ENCODE measurements at regions of chr4 and their contacts with region 1.

Region 1: DNA sequence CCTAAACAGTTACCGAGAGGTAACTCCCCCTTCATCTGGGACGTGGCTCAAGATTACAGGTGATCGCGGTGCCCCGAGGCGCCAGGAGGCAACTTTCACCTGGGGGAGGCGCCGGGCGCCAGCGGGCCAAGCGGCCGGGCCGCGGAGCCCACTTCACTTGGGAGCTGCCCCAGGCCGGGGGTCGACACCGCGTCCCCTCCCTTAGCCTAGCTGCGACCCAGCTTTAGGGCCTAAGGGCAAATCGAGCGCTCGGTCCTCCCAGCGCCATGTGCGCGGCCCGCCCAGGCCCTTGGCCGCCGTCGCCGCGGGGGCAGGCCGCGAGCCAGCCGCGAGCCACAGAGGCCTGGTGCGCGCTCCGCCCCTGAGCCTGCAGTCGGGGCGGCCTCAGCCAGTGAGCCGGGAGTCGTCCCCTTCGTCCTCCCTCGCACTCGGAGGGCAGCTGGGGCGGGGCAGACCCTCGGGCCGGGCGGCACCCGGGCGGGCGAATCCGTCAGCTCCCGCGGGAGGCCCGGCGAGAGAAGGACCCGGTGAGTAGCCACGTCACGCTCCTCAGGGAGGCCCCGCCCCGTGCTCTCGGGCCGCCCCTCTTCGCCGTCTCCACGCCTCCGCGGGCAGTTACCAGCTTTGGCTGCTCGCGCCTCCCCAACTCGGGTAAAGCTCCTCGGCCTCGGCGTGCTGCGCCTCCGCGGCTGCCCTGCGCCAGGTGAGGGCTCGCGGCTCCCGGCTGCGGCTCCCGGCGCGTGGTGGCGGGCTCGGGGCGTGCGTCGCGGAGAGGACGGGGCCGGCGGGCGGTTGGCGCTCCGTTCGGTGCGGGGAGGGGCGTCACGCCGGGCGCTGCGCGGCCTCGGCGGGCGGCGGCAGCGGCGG is at the start of gene LARP1B:
- DNase-seq: peak; percentile 95
- ATAC-seq: peak; percentile 94
- H3K4me3 Mint-ChIP-seq: peak within 1 kb of the TSS; percentile 84
- H3K27ac Mint-ChIP-seq: peak within 1 kb of the TSS; percentile 94
- H3K4me1 Mint-ChIP-seq: peaks cover 17% of the 10 kb centered on the region
- H3K27me3 Mint-ChIP-seq: no peaks in the 10 kb centered on the region
- CTCF ChIP-seq: no peak
- total RNA-seq, gene LARP1B: 23.8 to 23.9 TPM

Region 2: DNA sequence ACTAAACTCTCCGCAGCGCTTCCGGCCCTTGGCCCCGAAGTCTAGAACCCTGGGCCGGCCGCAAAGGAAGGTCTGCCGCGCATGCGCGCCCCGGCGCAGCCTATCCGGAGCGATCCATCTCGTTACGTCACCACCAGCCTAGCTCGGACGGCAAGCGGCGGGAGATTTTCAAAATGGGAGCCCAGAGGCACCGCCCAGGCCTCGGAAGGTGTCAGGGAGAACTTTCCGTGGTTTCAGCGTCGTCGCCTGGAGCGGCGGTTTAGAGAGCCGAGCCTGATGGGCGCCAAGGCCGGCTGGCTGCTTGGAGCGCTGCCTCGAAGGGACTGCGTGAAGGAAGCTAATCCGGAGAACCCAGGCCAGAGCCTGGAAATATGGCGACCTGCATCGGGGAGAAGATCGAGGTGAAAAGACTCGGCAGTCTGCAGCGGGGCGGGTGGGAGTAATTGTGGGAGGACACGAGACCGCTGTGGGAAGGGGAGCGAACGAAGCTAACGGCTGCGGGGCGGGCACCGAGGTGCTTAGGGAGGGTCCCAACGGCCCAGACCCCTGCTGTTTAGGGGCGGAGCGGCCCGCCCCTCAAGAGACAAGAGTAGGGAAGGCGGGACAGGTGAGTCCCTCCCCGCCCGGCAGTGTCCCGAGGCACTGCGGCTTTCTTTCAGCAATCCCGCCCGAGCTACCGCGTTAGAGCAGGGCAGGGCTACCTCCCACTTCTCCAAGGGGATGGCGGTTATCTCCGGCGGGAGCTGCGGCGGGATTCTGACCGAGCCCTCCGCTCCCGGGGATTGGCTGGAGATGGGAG is 180.0 kb before region 1 on chr4 and contains the start of gene PLK4:
- CTCF ChIA-PET with region 1: no interaction called
- POLR2A ChIA-PET with region 1: interaction called, 10 read pairs
- intact Hi-C with region 1: no loop called
- DNase-seq: peak; percentile 97
- ATAC-seq: peak; percentile 96
- H3K4me3 Mint-ChIP-seq: peak within 1 kb of the TSS; percentile 98
- H3K27ac Mint-ChIP-seq: peak within 1 kb of the TSS; percentile 98
- H3K4me1 Mint-ChIP-seq: peaks cover 11% of the 10 kb centered on the region
- H3K27me3 Mint-ChIP-seq: no peaks in the 10 kb centered on the region
- CTCF ChIP-seq: no peak
- total RNA-seq, gene PLK4: 42.0 to 45.1 TPM

Region 3: GRCh38 chr4:128287871-128288688 is 227.1 kb after region 1 on chr4:
- CTCF ChIA-PET with region 1: interaction called, 3 read pairs
- POLR2A ChIA-PET with region 1: interaction called, 3 read pairs
- intact Hi-C with region 1: loop called (anchors 5 kb)
- DNase-seq: peak; percentile 100
- ATAC-seq: peak; percentile 91
- H3K4me3 Mint-ChIP-seq: peak overlapping the region; percentile 81
- H3K27ac Mint-ChIP-seq: peak overlapping the region; percentile 89
- H3K4me1 Mint-ChIP-seq: peaks cover 30% of the 10 kb centered on the region
- H3K27me3 Mint-ChIP-seq: no peaks in the 10 kb centered on the region
- CTCF ChIP-seq: no peak

Region 4: DNA sequence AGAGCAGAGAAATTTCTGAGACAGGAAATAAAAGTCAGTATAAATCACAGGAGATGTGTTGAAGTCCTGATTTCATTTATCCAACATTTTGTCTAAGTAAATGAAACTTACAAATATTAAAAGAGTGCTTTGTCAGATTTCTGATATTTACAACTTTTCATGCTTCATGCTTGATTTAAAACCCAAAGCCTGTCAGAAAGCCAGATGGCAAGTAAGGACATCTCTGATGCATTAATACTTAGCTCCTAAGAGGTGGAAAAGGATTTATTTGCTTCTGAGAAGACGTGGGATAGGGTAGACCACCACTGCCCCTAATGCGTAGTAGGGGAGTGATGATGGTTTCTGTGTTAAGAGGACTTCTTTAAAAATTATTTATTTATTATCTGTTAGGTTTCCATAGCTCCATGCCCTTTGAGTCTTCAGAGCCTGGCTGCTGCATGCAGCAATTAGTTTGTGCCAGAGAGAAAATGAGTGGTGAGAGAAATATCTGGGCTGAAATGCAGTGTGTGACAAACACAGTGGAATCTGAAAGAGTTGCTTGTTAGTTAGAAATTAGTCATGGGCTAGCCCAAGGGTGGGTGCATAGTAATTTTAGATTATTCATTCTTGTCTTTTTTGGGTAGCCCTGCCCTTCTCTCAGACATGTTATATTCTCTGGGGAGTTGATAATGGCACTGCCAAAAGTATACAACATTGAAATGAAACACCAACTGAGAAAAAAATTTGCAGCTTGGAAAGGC is 1368.8 kb after region 1 on chr4:
- CTCF ChIA-PET with region 1: no interaction called
- POLR2A ChIA-PET with region 1: no interaction called
- intact Hi-C with region 1: no loop called
- DNase-seq: no peak
- ATAC-seq: no peak
- H3K4me3 Mint-ChIP-seq: no peak overlapping the region
- H3K27ac Mint-ChIP-seq: no peak overlapping the region
- H3K4me1 Mint-ChIP-seq: no peaks in the 10 kb centered on the region
- H3K27me3 Mint-ChIP-seq: no peaks in the 10 kb centered on the region
- CTCF ChIP-seq: no peak